Activated naive CD4-positive, alpha-beta T cell treated with anti-CD3 and anti-CD28 coated beads for 36 hours (primary cell): ENCODE measurements at regions of chr10 and their contacts with region 1.

Region 1: DNA sequence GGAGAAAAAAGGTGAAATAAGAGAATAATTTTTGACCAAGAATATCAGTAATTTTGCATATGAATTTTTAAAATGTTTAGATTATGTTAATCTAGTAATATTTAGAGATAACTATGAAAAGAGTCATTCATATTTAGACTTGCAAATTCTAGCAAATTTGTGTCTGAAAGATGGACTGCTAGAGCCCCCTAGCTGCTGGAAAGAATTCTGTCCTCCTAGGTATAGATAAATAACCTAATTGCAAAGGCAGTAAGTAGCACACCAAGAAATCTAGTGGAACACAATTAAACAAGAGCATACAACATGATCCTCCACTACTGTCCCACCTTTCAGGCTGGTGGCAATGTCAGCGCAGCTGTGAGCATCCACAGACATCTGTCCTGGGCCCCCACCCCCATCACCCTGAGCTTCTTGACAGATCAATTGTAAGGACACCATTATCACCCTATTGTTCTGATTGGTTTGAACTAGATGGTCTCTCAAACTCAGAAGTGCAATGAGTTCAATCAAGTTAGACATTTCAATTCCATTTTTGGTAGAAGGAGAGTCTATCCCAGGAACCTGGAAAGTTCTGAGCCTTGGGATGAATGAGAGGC is 15.0 kb upstream of the GFRA1 start:
- DNase-seq: peak; percentile 43
- H3K4me3 Mint-ChIP-seq: no peak overlapping the region
- H3K27ac Mint-ChIP-seq: no peak overlapping the region
- H3K4me1 Mint-ChIP-seq: no peaks in the 10 kb centered on the region
- H3K27me3 Mint-ChIP-seq: peaks cover 7% of the 10 kb centered on the region

Region 2: DNA sequence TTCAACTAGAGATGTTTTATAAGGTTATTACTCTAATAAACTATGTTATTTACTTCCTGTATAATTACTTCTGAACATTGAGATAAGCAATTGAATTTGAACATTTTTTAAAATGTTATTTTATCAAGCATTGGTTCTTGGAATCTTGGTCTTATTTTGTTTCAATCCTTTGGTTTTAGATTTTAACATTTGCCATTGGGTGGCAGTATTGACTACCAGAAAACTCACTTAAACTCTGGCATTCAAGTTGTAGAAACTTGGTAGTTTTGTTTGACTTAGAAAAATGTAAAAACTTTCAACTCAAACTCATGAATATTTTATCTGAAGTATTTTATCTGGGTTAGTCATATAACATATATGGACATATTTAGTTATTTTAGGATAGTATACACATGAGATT is 1146.8 kb before region 1 on chr10:
- CTCF ChIA-PET with region 1: no interaction called
- intact Hi-C with region 1: loop called (anchors 1 kb)
- DNase-seq: no peak
- H3K4me3 Mint-ChIP-seq: no peak overlapping the region
- H3K27ac Mint-ChIP-seq: no peak overlapping the region
- H3K4me1 Mint-ChIP-seq: no peaks in the 10 kb centered on the region
- H3K27me3 Mint-ChIP-seq: peaks cover 5% of the 10 kb centered on the region

Region 3: GRCh38 chr10:115171392-115171960 is 1116.5 kb before region 1 on chr10:
- CTCF ChIA-PET with region 1: no interaction called
- intact Hi-C with region 1: loop called (anchors 1 kb)
- DNase-seq: no peak
- H3K4me3 Mint-ChIP-seq: no peak overlapping the region
- H3K27ac Mint-ChIP-seq: no peak overlapping the region
- H3K4me1 Mint-ChIP-seq: no peaks in the 10 kb centered on the region
- H3K27me3 Mint-ChIP-seq: no peaks in the 10 kb centered on the region

Region 4: GRCh38 chr10:115706026-115706781 is 581.8 kb before region 1 on chr10:
- CTCF ChIA-PET with region 1: no interaction called
- intact Hi-C with region 1: loop called (anchors 1 kb)
- DNase-seq: no peak
- H3K4me3 Mint-ChIP-seq: no peak overlapping the region
- H3K27ac Mint-ChIP-seq: no peak overlapping the region
- H3K4me1 Mint-ChIP-seq: no peaks in the 10 kb centered on the region
- H3K27me3 Mint-ChIP-seq: no peaks in the 10 kb centered on the region

Region 5: DNA sequence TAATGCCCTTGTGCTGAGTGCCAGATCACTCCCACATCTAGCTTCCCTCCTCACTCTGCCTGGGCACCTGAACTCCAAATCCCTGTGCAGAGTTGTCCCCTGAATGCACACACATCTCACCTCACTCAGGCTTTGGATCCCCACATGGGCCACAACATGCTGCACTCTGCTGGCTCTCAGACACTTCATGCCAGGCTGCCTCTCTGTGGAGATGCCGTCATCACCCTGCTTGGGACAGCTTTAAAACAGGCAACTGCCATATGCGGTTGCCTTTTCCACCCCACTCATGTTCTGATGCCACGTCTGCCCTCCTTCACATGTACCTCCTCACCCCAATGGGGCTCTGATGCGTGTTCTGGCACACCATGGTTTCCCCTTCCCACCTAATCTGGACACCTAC is 492.0 kb before region 1 on chr10:
- CTCF ChIA-PET with region 1: no interaction called
- intact Hi-C with region 1: loop called (anchors 5 kb)
- DNase-seq: no peak
- H3K4me3 Mint-ChIP-seq: no peak overlapping the region
- H3K27ac Mint-ChIP-seq: no peak overlapping the region
- H3K4me1 Mint-ChIP-seq: no peaks in the 10 kb centered on the region
- H3K27me3 Mint-ChIP-seq: no peaks in the 10 kb centered on the region

Region 6: GRCh38 chr10:116429288-116429977 is 141.4 kb after region 1 on chr10:
- CTCF ChIA-PET with region 1: no interaction called
- intact Hi-C with region 1: no loop called
- DNase-seq: no peak
- H3K4me3 Mint-ChIP-seq: no peak overlapping the region
- H3K27ac Mint-ChIP-seq: no peak overlapping the region
- H3K4me1 Mint-ChIP-seq: no peaks in the 10 kb centered on the region
- H3K27me3 Mint-ChIP-seq: peaks cover 4% of the 10 kb centered on the region

Region 7: DNA sequence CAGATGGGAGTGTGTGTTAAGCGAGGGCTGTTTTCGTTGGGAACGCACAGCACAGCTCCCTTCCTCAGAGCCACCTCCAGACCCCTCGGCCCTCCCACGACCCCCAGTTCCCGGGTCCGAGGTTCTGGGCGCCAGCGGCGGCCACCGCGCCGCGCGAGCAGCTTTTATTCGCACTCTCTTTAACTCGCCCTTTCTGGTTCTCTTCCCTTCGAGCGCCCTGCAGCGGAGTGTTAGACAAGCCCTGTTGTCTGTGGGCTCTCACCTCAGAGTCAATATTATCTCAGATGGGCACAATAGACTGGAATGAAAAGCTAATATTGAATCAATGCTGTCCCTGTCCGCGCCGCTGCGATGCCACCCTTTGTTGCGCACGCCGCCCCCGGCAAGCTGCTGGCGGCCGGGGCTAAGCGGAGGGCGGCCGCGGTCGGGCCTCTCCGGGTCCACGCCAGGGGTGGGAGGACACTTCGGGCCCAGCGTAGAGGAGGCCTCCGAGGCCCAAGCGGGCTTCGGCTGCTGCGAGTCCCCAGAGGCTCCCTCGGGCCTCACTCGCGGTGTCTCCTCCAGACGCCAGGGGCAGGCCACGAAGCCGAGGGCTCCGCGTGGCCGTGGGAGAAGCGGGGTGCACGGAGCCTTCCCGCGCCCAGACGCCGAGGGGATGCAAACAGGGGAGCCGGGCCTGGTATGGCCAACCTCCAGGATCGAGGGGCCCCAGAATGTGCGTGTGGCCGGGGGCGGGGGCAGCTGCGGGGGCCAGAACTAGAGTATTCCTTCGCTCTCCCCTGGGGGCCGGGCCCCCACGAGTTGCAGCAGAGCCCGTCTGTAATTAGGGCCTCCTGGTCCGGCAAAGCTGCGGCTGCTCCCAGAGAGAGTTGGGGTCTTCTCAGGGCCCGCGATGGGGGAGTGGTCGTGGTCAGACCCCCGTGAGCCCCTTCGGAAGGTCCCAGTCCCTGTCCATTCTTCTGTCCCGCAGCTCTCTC is 1246.6 kb after region 1 on chr10:
- CTCF ChIA-PET with region 1: no interaction called
- intact Hi-C with region 1: no loop called
- DNase-seq: no peak
- H3K4me3 Mint-ChIP-seq: no peak overlapping the region
- H3K27ac Mint-ChIP-seq: no peak overlapping the region
- H3K4me1 Mint-ChIP-seq: peaks cover 18% of the 10 kb centered on the region
- H3K27me3 Mint-ChIP-seq: peaks cover 75% of the 10 kb centered on the region